CD8-positive, alpha-beta memory T cell (primary cell): ENCODE measurements at regions of chr1 and their contacts with region 1.

Region 1: GRCh38 chr1:23743287-23744052 is at the start of gene ELOA:
- DNase-seq: peak; percentile 68 to 85 (median 70)
- H3K4me3 ChIP-seq: peak within 1 kb of the TSS; percentile 79
- H3K4me3 Mint-ChIP-seq: peak within 1 kb of the TSS; percentile 90 to 98 (median 91)
- H3K27ac ChIP-seq: peak within 1 kb of the TSS; percentile 77
- H3K27ac Mint-ChIP-seq: peak within 1 kb of the TSS; percentile 92 to 99 (median 94)
- H3K4me1 ChIP-seq: peaks cover 41% of the 10 kb centered on the region
- H3K4me1 Mint-ChIP-seq: peaks cover 45 to 52% (median 48%) of the 10 kb centered on the region in 3 donors
- H3K27me3 ChIP-seq: no peaks in the 10 kb centered on the region
- H3K27me3 Mint-ChIP-seq: no peaks in the 10 kb centered on the region
- total RNA-seq, gene ELOA: 64.1 to 69.0 TPM

Region 2: DNA sequence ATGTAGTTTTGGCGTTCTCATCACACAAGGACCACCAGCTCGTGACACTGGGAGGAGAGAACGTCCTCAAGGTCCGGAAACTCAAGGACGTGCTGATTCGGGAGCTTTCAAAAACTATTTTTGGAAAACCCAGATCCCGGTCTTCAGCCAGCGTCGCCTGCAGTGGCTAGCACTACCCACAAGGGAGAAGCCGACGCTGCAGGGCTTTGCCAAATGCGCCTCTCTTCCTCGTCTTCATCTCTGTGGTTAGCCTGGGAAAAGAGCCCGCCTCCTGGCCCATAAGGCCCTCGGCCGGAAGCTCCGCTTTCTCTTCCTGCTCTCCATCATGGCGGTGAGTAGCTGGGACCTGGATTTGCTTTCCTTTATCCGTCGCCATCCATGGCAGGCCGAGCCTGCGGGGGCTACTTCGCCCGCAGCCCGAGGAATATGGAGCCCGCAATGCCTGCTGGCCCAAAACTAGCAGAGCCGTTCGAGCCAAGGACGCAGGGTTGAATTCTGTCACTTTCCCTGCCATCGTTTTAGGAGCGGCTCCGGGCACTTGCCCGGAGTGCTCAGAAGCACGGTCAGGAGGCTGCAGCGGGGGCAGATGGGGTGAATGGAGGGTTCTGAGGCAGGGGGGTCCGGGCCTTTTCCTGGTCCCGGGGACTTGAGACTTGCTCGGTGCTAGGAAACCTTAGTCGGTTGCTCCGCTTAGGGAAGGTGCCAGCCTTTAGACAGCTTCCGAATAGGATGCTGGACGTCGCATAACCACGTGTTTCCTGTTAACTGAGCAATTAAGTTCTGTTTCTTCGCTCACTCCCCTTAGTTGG is 51.8 kb before region 1 on chr1 and contains the start of gene RPL11:
- CTCF ChIA-PET with region 1: interaction called, 4 read pairs
- POLR2A ChIA-PET with region 1: interaction called, 14 read pairs
- DNase-seq: peak; percentile 71 to 90 (median 85)
- H3K4me3 ChIP-seq: peak within 1 kb of the TSS; percentile 99
- H3K4me3 Mint-ChIP-seq: peak within 1 kb of the TSS; percentile 94 to 100 (median 96)
- H3K27ac ChIP-seq: peak within 1 kb of the TSS; percentile 89
- H3K27ac Mint-ChIP-seq: peak within 1 kb of the TSS; percentile 93 to 99 (median 95)
- H3K4me1 ChIP-seq: peaks cover 25% of the 10 kb centered on the region
- H3K4me1 Mint-ChIP-seq: peaks cover 46 to 49% (median 47%) of the 10 kb centered on the region in 3 donors
- H3K27me3 ChIP-seq: no peaks in the 10 kb centered on the region
- H3K27me3 Mint-ChIP-seq: peaks cover 0 to 2% of the 10 kb centered on the region in 2 donors
- total RNA-seq, gene RPL11: 1,242 to 1,292 TPM

Region 3: GRCh38 chr1:23701996-23702395 is 41.5 kb before region 1 on chr1:
- CTCF ChIA-PET with region 1: no interaction called
- POLR2A ChIA-PET with region 1: interaction called, 12 read pairs
- DNase-seq: no peak
- H3K4me3 ChIP-seq: no peak overlapping the region
- H3K4me3 Mint-ChIP-seq: no peak overlapping the region
- H3K27ac ChIP-seq: no peak overlapping the region
- H3K27ac Mint-ChIP-seq: peak overlapping the region in 1 of 8 donors; percentile 33
- H3K4me1 ChIP-seq: peaks cover 4% of the 10 kb centered on the region
- H3K4me1 Mint-ChIP-seq: peaks cover 12 to 35% (median 32%) of the 10 kb centered on the region in 3 donors
- H3K27me3 ChIP-seq: no peaks in the 10 kb centered on the region
- H3K27me3 Mint-ChIP-seq: no peaks in the 10 kb centered on the region

Region 4: GRCh38 chr1:23772049-23772853 is 28.8 kb after region 1 on chr1:
- CTCF ChIA-PET with region 1: interaction called, 14 read pairs
- POLR2A ChIA-PET with region 1: interaction called, 5 read pairs
- DNase-seq: peak; percentile 71 to 87 (median 75)
- H3K4me3 ChIP-seq: no peak overlapping the region
- H3K4me3 Mint-ChIP-seq: peak overlapping the region in 2 of 7 donors; percentile 43 to 47
- H3K27ac ChIP-seq: no peak overlapping the region
- H3K27ac Mint-ChIP-seq: peak overlapping the region in 4 of 8 donors; percentile 9 to 47 (median 32)
- H3K4me1 ChIP-seq: peaks cover 8% of the 10 kb centered on the region
- H3K4me1 Mint-ChIP-seq: peaks cover 16 to 25% (median 24%) of the 10 kb centered on the region in 3 donors
- H3K27me3 ChIP-seq: no peaks in the 10 kb centered on the region
- H3K27me3 Mint-ChIP-seq: no peaks in the 10 kb centered on the region

Region 5: DNA sequence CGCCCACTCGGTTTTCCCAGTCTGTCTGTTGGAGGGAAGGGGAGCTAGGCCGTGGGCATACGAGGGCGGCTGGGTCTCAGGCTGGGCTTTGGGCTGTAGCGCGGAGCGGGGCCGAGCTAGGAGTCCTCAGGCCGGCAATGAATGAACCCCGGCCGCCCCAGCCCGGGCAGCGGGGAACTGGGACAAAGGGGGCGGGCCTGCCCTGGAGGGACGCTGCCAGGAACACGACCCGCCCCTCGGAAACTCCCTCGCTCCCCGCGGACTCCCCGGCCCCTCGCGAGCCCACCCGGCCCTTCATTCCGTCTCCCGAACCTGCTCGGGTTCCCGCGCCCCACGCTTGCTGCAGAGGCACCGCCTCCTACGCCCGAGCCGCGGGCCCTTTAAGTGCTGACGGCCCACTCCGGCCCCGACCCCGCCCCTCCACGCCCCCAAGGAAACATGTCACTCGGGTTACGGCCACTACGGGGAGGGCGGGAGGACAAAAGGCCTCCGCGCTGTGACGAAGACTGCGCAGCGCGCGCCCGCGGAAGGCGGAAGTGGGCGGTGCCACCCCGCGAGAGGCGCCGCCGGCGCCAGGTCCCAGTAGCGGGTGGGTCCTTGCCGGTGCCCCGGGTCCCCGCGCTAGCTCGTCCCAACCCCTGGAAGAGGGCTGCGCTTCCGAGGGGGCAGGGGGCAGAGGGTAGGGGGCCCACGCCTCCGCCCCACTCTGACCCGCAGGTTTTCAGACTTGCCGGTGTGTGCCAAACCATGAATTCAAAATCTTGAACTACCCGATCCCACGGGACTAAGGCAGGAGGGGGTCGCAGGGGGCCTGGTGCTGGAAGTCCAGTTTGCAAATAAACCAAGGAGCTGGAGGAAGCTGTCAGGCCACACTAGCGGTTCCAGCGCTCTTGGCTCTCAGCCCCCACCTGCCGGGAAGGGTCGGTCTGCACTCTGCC is 57.2 kb after region 1 on chr1 and contains the start of gene GALE:
- CTCF ChIA-PET with region 1: no interaction called
- POLR2A ChIA-PET with region 1: no interaction called
- DNase-seq: peak; percentile 92 to 98 (median 95)
- H3K4me3 ChIP-seq: peak within 1 kb of the TSS; percentile 70
- H3K4me3 Mint-ChIP-seq: peak within 1 kb of the TSS; percentile 85 to 97 (median 91)
- H3K27ac ChIP-seq: peak within 1 kb of the TSS; percentile 85
- H3K27ac Mint-ChIP-seq: peak within 1 kb of the TSS; percentile 84 to 96 (median 91)
- H3K4me1 ChIP-seq: peaks cover 20% of the 10 kb centered on the region
- H3K4me1 Mint-ChIP-seq: peaks cover 14 to 24% (median 19%) of the 10 kb centered on the region in 3 donors
- H3K27me3 ChIP-seq: no peaks in the 10 kb centered on the region
- H3K27me3 Mint-ChIP-seq: no peaks in the 10 kb centered on the region
- total RNA-seq, gene GALE: 50.5 to 55.3 TPM